ENCODE measurements at regions of chr20 and their contacts with region 1.

Region 1: DNA sequence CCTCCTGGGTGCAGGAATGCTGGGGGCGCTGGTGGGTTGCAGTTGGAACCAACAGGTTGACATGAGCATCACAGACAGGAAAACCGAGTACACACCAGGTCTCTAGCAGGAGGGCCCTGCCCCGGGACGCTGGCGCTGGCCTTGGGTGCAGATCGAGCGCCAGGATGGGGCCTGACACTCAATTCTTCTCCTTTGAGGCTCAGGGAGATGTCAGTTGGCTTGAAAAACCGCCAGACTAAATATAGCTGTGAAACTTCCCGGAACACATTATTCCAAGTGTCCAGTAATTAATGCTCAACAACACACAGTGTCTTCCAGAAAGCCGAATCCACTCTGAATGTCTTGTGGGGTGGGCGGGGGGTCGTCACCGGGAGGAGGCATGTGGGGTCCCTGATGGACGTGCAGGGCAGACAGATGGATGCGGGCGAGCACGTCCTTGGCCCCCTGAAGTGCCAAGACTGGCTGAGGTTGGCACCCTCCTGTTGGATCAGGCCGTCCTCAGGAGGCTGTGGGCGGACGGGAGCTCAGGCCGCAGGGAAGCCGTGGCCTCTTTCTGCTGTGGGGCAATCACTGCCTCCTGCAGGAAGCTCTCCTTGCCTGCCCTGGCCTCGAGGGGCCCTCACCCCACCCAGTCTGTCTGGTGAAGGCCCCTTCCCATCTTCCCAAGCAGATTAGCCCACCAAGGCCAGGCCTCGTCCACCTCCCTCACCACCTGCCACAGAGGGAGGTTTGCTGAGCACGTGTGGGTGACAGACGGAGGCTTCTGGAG is 19.4 kb upstream of the GATA5 start:
- DNase-seq: peak in 1 of 2 donors; percentile 77
- ATAC-seq: peak; percentile 44 to 73 (median 66)
- H3K4me3 ChIP-seq: peak overlapping the region; percentile 25
- H3K27ac ChIP-seq: peak overlapping the region; percentile 88
- H3K4me1 ChIP-seq: peaks cover 40% of the 10 kb centered on the region
- H3K27me3 ChIP-seq: peaks cover 0 to 3% (median 0%) of the 10 kb centered on the region in 3 donors
- CTCF ChIP-seq: no peak

Region 2: GRCh38 chr20:62407221-62407992 is 87.8 kb before region 1 on chr20 and contains the start of gene CABLES2:
- intact Hi-C with region 1: loop called in 1 of 2 experiments (anchors 5 kb)
- DNase-seq: peak; percentile 96 to 98
- ATAC-seq: peak; percentile 92 to 95 (median 94)
- H3K4me3 ChIP-seq: peak within 1 kb of the TSS; percentile 74
- H3K27ac ChIP-seq: peak within 1 kb of the TSS; percentile 9
- H3K4me1 ChIP-seq: peaks cover 26% of the 10 kb centered on the region
- H3K27me3 ChIP-seq: no peaks in the 10 kb centered on the region
- CTCF ChIP-seq: peak; percentile 21
- total RNA-seq, gene CABLES2: 3.0 to 4.2 (median 3.9) TPM